Endothelial cell of umbilical vein (primary cell): ENCODE measurements at regions of chr9 and their contacts with region 1.

Region 1: DNA sequence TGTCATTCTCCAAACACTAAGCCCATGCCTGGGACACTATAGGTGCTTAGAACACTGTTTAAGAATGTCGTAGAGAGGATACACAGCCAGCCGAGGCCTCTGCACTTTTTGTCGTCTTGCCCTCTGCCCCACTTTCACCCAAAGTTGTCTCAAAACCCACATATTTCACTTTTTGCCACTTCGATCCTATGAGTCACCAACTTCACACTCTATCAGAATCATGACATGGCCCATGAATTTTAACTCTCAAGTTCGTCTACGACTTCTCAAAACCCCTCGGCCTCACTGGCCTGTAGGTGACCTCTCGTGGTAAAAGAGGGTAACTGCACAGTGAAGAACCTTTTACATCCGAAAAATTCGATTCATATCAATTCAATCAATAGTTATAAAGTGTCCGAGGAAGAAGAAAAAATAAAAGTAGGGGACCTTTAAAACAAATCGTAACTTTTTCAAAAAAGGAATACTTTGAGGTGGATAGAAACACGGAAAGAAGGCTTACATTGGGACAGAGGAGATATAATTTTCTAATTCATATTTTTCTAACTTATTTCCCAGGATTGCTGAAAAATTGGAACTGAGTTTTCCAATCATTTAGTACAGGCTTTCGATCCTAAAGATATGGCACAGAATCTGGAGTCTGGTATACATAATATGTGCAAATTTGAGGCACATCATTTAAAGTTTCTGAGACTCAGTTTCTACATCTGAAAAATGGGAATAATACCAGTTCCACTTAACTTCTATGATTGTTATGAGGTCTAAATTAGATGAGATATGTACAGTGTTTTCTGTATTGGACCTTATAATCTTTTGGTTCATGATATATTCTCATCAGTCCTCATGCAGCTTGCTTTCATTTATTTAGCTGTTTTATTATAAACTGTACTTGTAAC is 122.6 kb downstream of the APBA1 start:
- DNase-seq: peak; percentile 67
- H3K4me3 ChIP-seq: no peak overlapping the region
- H3K27ac ChIP-seq: no peak overlapping the region
- H3K4me1 ChIP-seq: no peaks in the 10 kb centered on the region
- H3K27me3 ChIP-seq: peaks cover 6 to 8% of the 10 kb centered on the region in 2 experiments
- CTCF ChIP-seq: peak; percentile 79 to 87
- POLR2A ChIP-seq: no peak

Region 2: DNA sequence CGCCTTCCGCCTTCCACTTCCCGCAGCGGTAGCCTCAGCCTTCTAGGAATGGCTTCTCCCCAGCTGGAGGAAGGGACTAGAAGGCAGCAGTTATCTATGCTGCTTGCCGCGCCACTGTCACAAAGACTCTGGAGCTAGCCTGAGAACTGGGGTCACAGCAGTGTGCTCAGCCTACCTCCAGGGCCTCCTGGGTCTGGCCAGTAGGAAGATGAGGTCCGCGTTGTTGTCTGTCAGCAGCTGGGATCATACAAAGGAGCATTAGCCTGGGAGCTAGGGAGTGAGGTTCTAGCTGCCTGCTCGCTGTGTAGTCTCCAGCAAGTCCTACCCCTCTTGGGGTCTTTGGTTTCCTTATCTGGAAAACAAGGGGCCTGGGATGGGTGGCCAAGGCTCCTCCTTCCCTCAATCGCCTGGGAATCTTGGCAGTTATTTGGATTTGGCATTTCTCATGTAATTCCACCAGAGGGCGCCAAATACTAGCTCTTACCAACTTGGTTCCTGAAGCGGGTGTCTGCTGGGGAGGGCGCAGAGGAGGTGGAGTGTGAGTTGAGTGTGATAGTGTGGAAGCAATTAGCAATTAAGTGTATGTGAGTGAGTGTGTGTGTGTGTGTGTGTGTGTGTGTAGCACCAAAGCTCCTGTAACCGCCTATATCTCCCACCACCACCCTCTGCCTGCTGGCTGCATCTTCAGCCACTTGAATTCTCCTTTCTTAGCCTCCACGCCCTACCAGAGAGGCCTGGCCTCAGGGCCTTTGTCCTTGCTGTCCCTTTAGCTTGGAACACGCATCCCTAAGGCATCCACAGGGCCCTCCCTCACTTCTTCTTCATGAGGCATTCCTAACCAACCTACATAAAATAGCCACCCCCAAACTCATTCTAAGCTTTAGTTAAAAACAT is 127.4 kb before region 1 on chr9:
- CTCF ChIA-PET with region 1: interaction called, 216 read pairs
- POLR2A ChIA-PET with region 1: interaction called, 4 read pairs
- dilution Hi-C with region 1: no loop called
- intact Hi-C with region 1: loop called (anchors 1 kb)
- DNase-seq: peak; percentile 66
- H3K4me3 ChIP-seq: no peak overlapping the region
- H3K27ac ChIP-seq: no peak overlapping the region
- H3K4me1 ChIP-seq: no peaks in the 10 kb centered on the region
- H3K27me3 ChIP-seq: peaks cover 2% of the 10 kb centered on the region in 2 experiments
- CTCF ChIP-seq: peak; percentile 58 to 66
- POLR2A ChIP-seq: no peak

Region 3: GRCh38 chr9:69532396-69532795 is 17.2 kb before region 1 on chr9:
- CTCF ChIA-PET with region 1: interaction called, 14 read pairs
- POLR2A ChIA-PET with region 1: no interaction called
- dilution Hi-C with region 1: no loop called
- intact Hi-C with region 1: no loop called
- DNase-seq: no peak
- H3K4me3 ChIP-seq: no peak overlapping the region
- H3K27ac ChIP-seq: no peak overlapping the region
- H3K4me1 ChIP-seq: peaks cover 8% of the 10 kb centered on the region
- H3K27me3 ChIP-seq: peaks cover 0 to 7% of the 10 kb centered on the region in 2 experiments
- CTCF ChIP-seq: no peak
- POLR2A ChIP-seq: no peak

Region 4: GRCh38 chr9:69582544-69583297 is 33.2 kb after region 1 on chr9:
- CTCF ChIA-PET with region 1: no interaction called
- POLR2A ChIA-PET with region 1: no interaction called
- dilution Hi-C with region 1: no loop called
- intact Hi-C with region 1: no loop called
- DNase-seq: peak; percentile 62
- H3K4me3 ChIP-seq: no peak overlapping the region
- H3K27ac ChIP-seq: peak overlapping the region; percentile 63
- H3K4me1 ChIP-seq: peaks cover 35% of the 10 kb centered on the region
- H3K27me3 ChIP-seq: no peaks in the 10 kb centered on the region
- CTCF ChIP-seq: no peak
- POLR2A ChIP-seq: no peak

Region 5: GRCh38 chr9:69877854-69878514 is 328.4 kb after region 1 on chr9:
- CTCF ChIA-PET with region 1: interaction called, 4 read pairs
- POLR2A ChIA-PET with region 1: no interaction called
- dilution Hi-C with region 1: no loop called
- intact Hi-C with region 1: loop called (anchors 1 kb)
- DNase-seq: peak; percentile 53
- H3K4me3 ChIP-seq: no peak overlapping the region
- H3K27ac ChIP-seq: no peak overlapping the region
- H3K4me1 ChIP-seq: peaks cover 14% of the 10 kb centered on the region
- H3K27me3 ChIP-seq: peaks cover 3 to 9% of the 10 kb centered on the region in 2 experiments
- CTCF ChIP-seq: peak; percentile 27 to 30
- POLR2A ChIP-seq: no peak

Region 6: DNA sequence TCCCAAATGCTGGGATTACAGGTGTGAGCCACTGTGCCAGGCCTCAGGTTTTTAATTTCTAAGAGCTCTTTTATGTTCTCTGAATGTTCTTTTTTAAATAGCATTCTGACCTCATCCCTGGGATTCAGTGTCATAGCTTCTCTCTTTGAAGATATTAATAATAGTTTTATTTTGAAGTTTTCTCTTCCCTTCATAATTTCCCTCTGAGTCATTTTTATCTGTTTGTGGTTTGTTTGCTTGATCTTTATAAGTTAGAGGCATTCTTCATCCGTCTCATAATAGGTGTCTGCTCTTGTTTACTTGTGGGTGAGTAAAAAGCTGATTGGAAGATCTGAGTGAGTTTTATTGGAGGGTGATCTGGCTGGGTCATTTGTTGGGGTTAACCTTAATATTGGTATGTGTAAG is 481.6 kb after region 1 on chr9:
- CTCF ChIA-PET with region 1: no interaction called
- POLR2A ChIA-PET with region 1: no interaction called
- dilution Hi-C with region 1: no loop called
- intact Hi-C with region 1: no loop called
- DNase-seq: peak; percentile 32
- H3K4me3 ChIP-seq: no peak overlapping the region
- H3K27ac ChIP-seq: no peak overlapping the region
- H3K4me1 ChIP-seq: no peaks in the 10 kb centered on the region
- H3K27me3 ChIP-seq: no peaks in the 10 kb centered on the region
- CTCF ChIP-seq: no peak
- POLR2A ChIP-seq: no peak